ENCODE measurements at regions of chr10 and their contacts with region 1.

Region 1: DNA sequence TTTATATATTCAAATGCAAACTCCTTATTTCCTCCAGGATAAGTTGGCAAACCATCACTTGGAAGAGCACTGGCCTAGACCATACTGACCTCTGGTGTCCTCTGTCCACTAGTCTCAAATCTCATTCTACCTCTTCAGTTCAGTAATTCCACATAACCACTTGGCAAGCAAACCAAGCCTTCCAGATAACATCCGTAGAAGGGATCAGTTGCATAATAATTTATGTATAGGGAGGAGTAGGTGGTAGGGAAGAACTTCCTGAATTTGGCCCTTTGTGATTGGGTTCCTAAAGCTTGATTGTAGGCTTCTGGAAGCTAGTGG is 55.0 kb downstream of the WAC start:
- DNase-seq: peak in 1 of 2 experiments; percentile 34
- H3K4me3 ChIP-seq: no peak overlapping the region
- H3K4me3 Mint-ChIP-seq: no peak overlapping the region
- H3K27ac Mint-ChIP-seq: no peak overlapping the region
- H3K4me1 ChIP-seq: peaks cover 10% of the 10 kb centered on the region; the same call in 1 of the 2 replicates
- H3K4me1 Mint-ChIP-seq: peaks cover 22% of the 10 kb centered on the region
- H3K27me3 ChIP-seq: no peaks in the 10 kb centered on the region
- H3K27me3 Mint-ChIP-seq: no peaks in the 10 kb centered on the region
- CTCF ChIP-seq: peak in 1 of 2 experiments; percentile 43

Region 2: DNA sequence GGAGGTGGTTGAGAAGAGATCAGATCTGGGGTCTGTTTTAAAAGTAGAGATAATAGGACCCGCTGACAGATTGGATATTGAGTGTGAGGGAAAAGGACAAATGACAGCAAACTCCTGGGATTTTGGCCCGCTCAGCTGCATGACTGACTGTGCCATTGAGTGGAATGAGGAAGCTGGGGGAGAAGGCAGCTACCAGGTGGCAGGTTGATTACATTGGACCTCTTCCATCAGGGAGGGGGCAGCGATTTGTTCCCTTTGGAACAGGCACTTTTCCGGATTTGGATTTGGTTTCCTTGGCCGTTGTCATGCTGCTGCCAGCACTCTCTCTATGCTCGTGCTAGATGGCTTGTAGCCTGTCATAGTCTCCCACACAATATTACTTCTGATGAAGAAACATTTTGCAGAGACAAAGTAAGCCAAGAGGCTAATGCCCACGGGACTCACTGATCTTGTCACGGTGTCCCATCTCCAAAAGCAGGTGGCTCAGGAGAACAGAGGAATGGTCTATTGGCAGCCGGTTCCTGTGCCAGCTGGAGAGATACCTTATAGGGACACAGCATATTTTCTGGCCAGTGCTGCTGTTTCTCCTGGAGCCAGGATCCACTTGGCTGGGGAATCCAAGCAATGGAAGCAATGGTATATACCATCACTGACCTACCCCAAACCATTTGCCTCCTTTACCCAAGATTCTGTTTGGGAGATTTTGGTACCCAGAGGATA is 124.1 kb before region 1 on chr10:
- CTCF ChIA-PET with region 1: no interaction called
- POLR2A ChIA-PET with region 1: no interaction called
- intact Hi-C with region 1: no loop called
- DNase-seq: no peak
- H3K4me3 ChIP-seq: no peak overlapping the region
- H3K4me3 Mint-ChIP-seq: no peak overlapping the region
- H3K27ac Mint-ChIP-seq: no peak overlapping the region
- H3K4me1 ChIP-seq: no peaks in the 10 kb centered on the region
- H3K4me1 Mint-ChIP-seq: no peaks in the 10 kb centered on the region
- H3K27me3 ChIP-seq: no peaks in the 10 kb centered on the region
- H3K27me3 Mint-ChIP-seq: no peaks in the 10 kb centered on the region
- CTCF ChIP-seq: no peak

Region 3: GRCh38 chr10:28532383-28533175 is 55.4 kb before region 1 on chr10 and contains the start of gene WAC:
- CTCF ChIA-PET with region 1: no interaction called
- POLR2A ChIA-PET with region 1: no interaction called
- intact Hi-C with region 1: loop called (anchors 5 kb)
- DNase-seq: peak; percentile 97 to 99
- H3K4me3 ChIP-seq: peak within 1 kb of the TSS; percentile 98
- H3K4me3 Mint-ChIP-seq: peak within 1 kb of the TSS; percentile 100
- H3K27ac Mint-ChIP-seq: peak within 1 kb of the TSS; percentile 100
- H3K4me1 ChIP-seq: peaks cover 16% of the 10 kb centered on the region
- H3K4me1 Mint-ChIP-seq: peaks cover 24% of the 10 kb centered on the region
- H3K27me3 ChIP-seq: no peaks in the 10 kb centered on the region
- H3K27me3 Mint-ChIP-seq: no peaks in the 10 kb centered on the region
- CTCF ChIP-seq: peak in 1 of 2 experiments; percentile 49
- total RNA-seq, gene WAC: 196 TPM in 2 replicates